MCF 10A (cell line): ENCODE measurements at regions of chr11 and their contacts with region 1.

Region 1: DNA sequence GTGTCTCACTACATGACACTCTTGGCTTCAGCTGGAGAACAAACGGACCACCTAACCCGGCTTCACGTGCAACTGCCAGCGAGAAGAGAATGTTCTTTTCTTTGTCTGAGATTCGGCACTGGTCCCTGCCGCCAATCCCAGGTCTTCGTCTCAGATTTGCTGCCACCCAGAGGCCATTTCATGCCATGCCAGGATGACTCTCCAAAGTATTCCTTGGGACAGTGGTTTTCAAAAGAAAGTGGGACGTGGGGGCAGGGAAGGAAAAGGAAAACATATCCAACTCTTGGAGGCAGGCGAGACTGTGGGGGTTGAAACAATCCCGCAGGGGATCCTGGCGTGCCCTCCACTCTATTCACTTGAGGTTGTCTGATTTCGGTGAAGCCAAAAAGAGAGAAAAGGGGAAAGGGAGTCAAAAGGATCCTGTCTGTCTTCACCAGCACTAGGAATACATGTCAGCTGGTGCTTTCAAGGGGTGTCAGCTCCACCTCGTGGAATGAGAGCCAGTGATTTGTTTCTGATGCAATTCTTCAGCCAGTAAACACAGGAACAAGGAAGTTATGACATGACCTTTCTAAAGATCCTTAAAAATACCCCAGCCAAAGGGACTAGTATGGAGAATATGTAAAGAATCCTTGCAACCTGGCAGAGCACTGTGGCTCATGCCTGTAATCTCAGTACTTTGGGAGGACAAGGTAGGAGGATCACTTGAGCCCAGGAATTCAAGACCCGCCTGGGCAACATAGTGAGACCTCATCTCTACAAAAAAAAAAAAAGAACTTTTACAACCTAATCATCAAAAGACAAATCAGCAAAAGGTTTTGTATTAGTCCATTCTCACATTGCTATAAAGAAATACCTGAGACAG is 41.0 kb upstream of the APLNR start:
- DNase-seq: peak; percentile 86
- H3K4me3 Mint-ChIP-seq: peak overlapping the region; percentile 49
- H3K27ac Mint-ChIP-seq: peak overlapping the region; percentile 83
- H3K4me1 Mint-ChIP-seq: peaks cover 44% of the 10 kb centered on the region
- H3K27me3 Mint-ChIP-seq: no peaks in the 10 kb centered on the region
- CTCF ChIP-seq: peak; percentile 62

Region 2: DNA sequence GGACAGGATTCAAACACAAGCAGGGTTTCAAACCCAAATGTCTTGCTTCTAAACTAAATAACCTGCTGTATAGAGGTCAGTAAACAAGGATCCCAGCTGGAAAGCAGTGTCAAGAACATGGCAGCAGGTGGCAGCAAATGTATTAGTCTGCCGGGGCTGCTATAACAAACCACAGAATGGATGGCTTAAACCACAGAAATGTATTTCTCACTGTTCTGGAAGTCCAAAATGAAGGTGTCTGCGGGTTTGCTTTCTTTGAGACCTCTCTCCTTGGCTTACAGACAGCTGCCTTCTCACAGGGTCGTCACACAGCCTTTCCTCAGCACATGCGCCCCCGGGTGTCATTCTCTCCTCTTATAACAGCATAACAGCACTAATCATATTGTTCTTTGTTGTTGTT is 161.4 kb before region 1 on chr11:
- CTCF ChIA-PET with region 1: interaction called, 3 read pairs
- POLR2A ChIA-PET with region 1: no interaction called
- intact Hi-C with region 1: loop called (anchors 1 kb)
- DNase-seq: peak; percentile 58
- H3K4me3 Mint-ChIP-seq: no peak overlapping the region
- H3K27ac Mint-ChIP-seq: no peak overlapping the region
- H3K4me1 Mint-ChIP-seq: no peaks in the 10 kb centered on the region
- H3K27me3 Mint-ChIP-seq: no peaks in the 10 kb centered on the region
- CTCF ChIP-seq: peak; percentile 47

Region 3: DNA sequence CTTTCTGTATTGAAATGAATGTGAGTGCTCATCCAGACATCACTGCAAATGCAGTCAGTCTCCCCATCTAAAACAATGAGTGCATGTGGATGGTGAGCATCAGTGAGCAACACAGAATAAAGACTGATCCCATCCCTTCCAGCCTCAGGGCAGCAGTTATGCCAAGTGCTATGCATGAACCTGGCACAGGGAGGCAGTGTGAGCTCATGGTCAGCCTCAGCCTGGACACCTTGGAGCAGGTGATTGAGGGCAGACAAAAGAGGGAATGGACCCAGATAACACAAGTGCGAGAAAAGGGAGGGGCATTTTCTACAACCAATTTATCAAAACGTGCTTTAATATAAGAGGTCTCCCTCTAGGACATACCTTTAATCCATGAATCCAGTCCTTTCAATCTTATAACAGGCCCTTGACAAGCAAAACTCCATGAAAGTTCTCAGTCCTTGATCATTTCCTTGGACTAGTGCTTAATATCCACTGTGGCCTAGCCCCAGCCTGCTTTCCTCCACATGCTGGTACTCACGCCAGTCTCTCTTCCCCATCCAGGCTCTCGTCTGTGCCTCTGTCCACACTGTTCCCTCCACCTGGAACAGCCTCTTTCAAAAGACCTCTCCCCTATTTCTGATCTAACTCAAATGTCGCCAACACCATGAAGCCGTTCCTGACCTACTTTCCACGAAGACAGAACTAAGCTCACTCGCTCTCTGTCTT is 146.8 kb before region 1 on chr11:
- CTCF ChIA-PET with region 1: interaction called, 15 read pairs
- POLR2A ChIA-PET with region 1: no interaction called
- intact Hi-C with region 1: loop called (anchors 1 kb)
- DNase-seq: peak; percentile 57
- H3K4me3 Mint-ChIP-seq: no peak overlapping the region
- H3K27ac Mint-ChIP-seq: no peak overlapping the region
- H3K4me1 Mint-ChIP-seq: peaks cover 11% of the 10 kb centered on the region
- H3K27me3 Mint-ChIP-seq: no peaks in the 10 kb centered on the region
- CTCF ChIP-seq: peak; percentile 58

Region 4: GRCh38 chr11:57150454-57150917 is 127.6 kb before region 1 on chr11:
- CTCF ChIA-PET with region 1: no interaction called
- POLR2A ChIA-PET with region 1: no interaction called
- intact Hi-C with region 1: no loop called
- DNase-seq: no peak
- H3K4me3 Mint-ChIP-seq: no peak overlapping the region
- H3K27ac Mint-ChIP-seq: no peak overlapping the region
- H3K4me1 Mint-ChIP-seq: no peaks in the 10 kb centered on the region
- H3K27me3 Mint-ChIP-seq: peaks cover 18% of the 10 kb centered on the region
- CTCF ChIP-seq: no peak

Region 5: GRCh38 chr11:57224537-57224936 is 53.5 kb before region 1 on chr11:
- CTCF ChIA-PET with region 1: no interaction called
- POLR2A ChIA-PET with region 1: no interaction called
- intact Hi-C with region 1: no loop called
- DNase-seq: no peak
- H3K4me3 Mint-ChIP-seq: no peak overlapping the region
- H3K27ac Mint-ChIP-seq: no peak overlapping the region
- H3K4me1 Mint-ChIP-seq: no peaks in the 10 kb centered on the region
- H3K27me3 Mint-ChIP-seq: no peaks in the 10 kb centered on the region
- CTCF ChIP-seq: no peak

Region 6: GRCh38 chr11:57294605-57295131 is 16.6 kb after region 1 on chr11:
- CTCF ChIA-PET with region 1: interaction called, 31 read pairs
- POLR2A ChIA-PET with region 1: interaction called, 93 read pairs
- intact Hi-C with region 1: loop called (anchors 2 kb)
- DNase-seq: peak; percentile 82
- H3K4me3 Mint-ChIP-seq: peak overlapping the region; percentile 31
- H3K27ac Mint-ChIP-seq: peak overlapping the region; percentile 90
- H3K4me1 Mint-ChIP-seq: peaks cover 38% of the 10 kb centered on the region
- H3K27me3 Mint-ChIP-seq: no peaks in the 10 kb centered on the region
- CTCF ChIP-seq: no peak

Region 7: GRCh38 chr11:57303990-57304579 is 26.0 kb after region 1 on chr11:
- CTCF ChIA-PET with region 1: interaction called, 7 read pairs
- POLR2A ChIA-PET with region 1: interaction called, 30 read pairs
- intact Hi-C with region 1: no loop called
- DNase-seq: peak; percentile 85
- H3K4me3 Mint-ChIP-seq: peak overlapping the region; percentile 63
- H3K27ac Mint-ChIP-seq: peak overlapping the region; percentile 68
- H3K4me1 Mint-ChIP-seq: peaks cover 44% of the 10 kb centered on the region
- H3K27me3 Mint-ChIP-seq: no peaks in the 10 kb centered on the region
- CTCF ChIP-seq: no peak

Region 8: DNA sequence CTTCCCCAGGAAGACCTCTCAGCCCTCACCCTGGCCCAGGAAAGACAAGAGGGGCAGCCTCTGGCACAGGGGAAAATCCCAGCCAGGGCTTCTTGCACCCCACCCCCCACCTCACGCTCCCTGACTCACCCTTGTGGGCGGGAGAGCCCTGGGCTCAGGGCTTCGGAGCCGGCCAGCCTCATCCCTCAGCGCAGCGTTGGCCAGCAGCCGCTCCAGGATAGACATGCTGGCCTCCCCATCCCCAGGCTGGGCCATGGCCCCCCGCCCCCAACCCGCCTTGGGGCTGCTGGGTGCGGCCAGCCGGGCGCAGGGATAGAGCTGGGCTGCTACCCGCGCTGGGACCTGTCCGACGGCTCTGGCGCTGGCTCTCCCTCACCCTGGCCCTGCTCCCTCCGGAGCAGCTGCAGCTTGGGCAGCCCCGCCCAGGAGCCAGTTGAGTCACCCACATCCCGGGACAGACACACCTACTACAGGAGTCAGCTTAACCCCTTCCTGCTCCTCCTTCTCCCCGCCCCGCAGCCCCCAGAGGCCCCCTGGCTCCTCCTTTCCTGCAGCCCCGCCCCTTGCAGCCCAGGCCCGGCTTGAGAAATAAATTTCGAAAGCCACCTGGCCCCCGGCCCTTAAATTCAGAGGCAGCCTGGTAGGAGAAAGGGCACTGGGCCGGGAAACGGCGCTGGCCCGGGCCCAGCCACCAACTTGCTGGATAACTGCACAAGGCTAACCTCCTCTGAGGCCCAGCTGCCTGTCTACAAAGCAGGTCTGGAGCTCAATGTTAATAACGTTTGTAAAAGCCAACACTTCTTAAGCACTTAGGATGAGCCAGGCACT is 33.2 kb after region 1 on chr11:
- CTCF ChIA-PET with region 1: interaction called, 3 read pairs
- POLR2A ChIA-PET with region 1: interaction called, 24 read pairs
- intact Hi-C with region 1: loop called (anchors 1 kb)
- DNase-seq: peak; percentile 97
- H3K4me3 Mint-ChIP-seq: peak overlapping the region; percentile 80
- H3K27ac Mint-ChIP-seq: peak overlapping the region; percentile 95
- H3K4me1 Mint-ChIP-seq: peaks cover 49% of the 10 kb centered on the region
- H3K27me3 Mint-ChIP-seq: no peaks in the 10 kb centered on the region
- CTCF ChIP-seq: no peak